Transverse colon (tissue), 4 donors: ENCODE measurements at regions of chrX and their contacts with region 1.

Region 1: GRCh38 chrX:14124562-14124961 is 94.9 kb upstream of the GEMIN8 start:
- DNase-seq: no peak
- H3K4me3 ChIP-seq: no peak overlapping the region
- H3K27ac ChIP-seq: peak overlapping the region in 2 of 4 donors; percentile 42 to 61
- H3K4me1 ChIP-seq: no peaks in the 10 kb centered on the region
- H3K27me3 ChIP-seq: no peaks in the 10 kb centered on the region
- CTCF ChIP-seq: no peak
- EP300 ChIP-seq: no peak
- POLR2A ChIP-seq: no peak

Region 2: DNA sequence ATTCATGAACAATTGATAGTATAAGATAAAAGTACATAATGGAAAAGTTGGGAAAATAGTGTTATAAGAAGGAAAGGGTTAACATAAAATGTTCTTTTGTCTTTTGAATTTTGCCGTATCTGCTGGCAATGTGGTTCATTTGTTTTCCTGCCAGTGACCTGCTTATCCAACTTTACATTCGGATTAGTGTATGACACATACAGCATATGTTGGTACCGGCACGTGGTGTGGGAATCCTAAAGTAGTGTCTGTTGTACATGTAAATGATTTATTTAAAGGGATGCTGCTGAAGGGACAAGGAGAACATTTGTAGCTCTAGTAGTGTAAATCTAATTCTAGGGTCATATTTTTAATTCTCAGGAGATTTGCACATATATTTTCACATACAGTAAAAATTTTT is 424.2 kb before region 1 on chrX:
- in situ Hi-C with region 1: no loop called
- intact Hi-C with region 1: loop called (anchors 5 kb)
- DNase-seq: no peak
- H3K4me3 ChIP-seq: no peak overlapping the region
- H3K27ac ChIP-seq: peak overlapping the region in 2 of 4 donors; percentile 48 to 65
- H3K4me1 ChIP-seq: peaks cover 3 to 38% (median 14%) of the 10 kb centered on the region in 4 donors
- H3K27me3 ChIP-seq: no peaks in the 10 kb centered on the region
- CTCF ChIP-seq: no peak
- EP300 ChIP-seq: no peak
- POLR2A ChIP-seq: no peak